SK-N-SH (cell line): ENCODE measurements at regions of chr2 and their contacts with region 1.

Region 1: GRCh38 chr2:218618102-218618860 is 10.6 kb downstream of the PLCD4 start:
- DNase-seq: peak; percentile 50
- H3K4me3 ChIP-seq: no peak overlapping the region
- H3K27ac ChIP-seq: no peak overlapping the region
- H3K4me1 ChIP-seq: no peaks in the 10 kb centered on the region
- H3K27me3 ChIP-seq: no peaks in the 10 kb centered on the region
- CTCF ChIP-seq: peak; percentile 36
- EP300 ChIP-seq: no peak
- RAD21 ChIP-seq: peak; percentile 72

Region 2: DNA sequence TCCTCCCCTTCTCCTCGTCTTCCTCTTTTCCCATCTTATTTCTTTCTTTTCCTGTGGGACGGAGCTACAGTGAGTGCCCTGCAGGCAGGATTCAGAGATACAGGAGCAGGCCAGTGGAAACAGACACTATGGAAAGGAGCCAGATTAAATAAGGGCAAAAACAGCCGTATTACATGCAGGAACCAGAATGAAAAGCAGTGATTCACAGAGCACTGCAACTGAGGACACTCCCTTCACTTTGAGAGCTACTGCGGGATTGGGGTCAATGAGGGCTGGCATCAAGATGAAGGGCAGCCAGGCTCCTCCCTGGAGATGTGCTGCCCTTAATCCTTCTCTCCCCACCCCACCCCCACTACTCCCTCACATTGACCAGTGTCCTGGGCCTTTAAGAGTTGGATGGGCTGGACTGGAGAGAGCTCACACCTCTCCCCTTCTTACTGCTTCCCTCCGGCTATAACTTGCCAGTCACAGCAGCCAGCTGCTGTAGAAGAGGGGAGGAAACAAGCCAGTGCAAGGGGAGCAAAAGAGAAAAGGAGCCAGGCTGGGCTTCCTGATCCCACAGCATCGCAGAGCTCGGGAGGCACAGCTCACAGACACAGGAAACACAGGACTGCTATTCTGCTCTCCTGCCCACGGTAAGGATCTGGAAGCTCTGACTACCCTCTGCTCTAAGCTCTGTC is 10.7 kb before region 1 on chr2 and contains the start of gene PLCD4:
- CTCF ChIA-PET with region 1: interaction called, 12 read pairs
- POLR2A ChIA-PET with region 1: interaction called, 5 read pairs
- DNase-seq: peak; percentile 79
- H3K4me3 ChIP-seq: peak within 1 kb of the TSS; percentile 50 to 56
- H3K27ac ChIP-seq: peak within 1 kb of the TSS; percentile 62 to 99
- H3K4me1 ChIP-seq: peaks cover 10 to 25% of the 10 kb centered on the region in 2 experiments
- H3K27me3 ChIP-seq: no peaks in the 10 kb centered on the region
- CTCF ChIP-seq: peak; percentile 19; the same call in 1 of the 2 replicates
- EP300 ChIP-seq: peak in 1 of 2 experiments; percentile 21; a peak in 2 of 4 replicates
- RAD21 ChIP-seq: peak; percentile 14; the same call in 1 of the 2 replicates
- polyA plus RNA-seq, gene PLCD4: 8.5 and 11.0 TPM in 2 replicates